ENCODE measurements at regions of chr1 and their contacts with region 1.

Region 1: DNA sequence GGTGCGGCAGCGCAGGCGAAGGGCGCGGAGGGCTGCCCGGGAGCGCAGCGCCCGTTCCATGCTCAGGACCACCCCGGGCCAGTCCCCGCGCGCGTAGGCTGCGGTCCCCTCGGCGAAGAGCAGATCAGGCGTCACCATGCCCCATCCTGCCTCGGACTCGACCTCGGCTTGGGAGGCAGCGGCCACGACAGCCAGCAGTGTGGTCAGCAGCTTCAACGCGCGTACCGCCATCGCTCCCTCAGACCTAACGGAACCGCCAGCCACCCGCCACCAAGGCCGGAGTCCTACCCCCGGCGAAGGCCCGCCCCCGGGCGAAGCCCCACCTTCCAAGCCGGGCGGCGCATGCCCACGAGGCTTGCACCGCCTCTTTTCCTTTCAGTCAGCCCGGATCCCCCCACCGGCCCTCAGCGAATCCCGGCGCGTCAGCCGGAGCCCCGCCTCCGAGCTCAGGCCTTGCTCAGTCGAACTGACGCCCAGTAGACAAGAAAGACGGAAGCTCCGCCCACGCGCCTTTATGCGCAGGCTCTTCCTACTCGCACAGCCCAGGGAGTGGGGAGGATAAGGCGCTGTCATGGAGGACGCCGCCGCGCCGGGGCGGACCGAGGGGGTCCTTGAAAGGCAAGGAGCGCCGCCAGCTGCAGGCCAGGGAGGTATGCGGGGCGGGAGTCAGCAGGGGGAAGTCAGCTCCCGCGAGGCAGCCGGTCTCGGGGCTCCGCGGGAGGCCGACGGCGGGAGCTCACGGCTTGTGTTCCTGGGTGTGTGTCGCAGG is at the starts of genes C1orf50 and P3H1:
- DNase-seq: peak; percentile 99 to 100
- ATAC-seq: peak; percentile 94 to 96
- H3K4me3 ChIP-seq: peak within 1 kb of the TSS; percentile 75 to 99 (median 94)
- H3K27ac ChIP-seq: peak within 1 kb of the TSS; percentile 92 to 96 (median 95)
- H3K4me1 ChIP-seq: peaks cover 33 to 34% of the 10 kb centered on the region in 2 donors
- H3K27me3 ChIP-seq: no peaks in the 10 kb centered on the region
- CTCF ChIP-seq: no peak
- POLR2A ChIP-seq: peak; percentile 97 to 98
- total RNA-seq, gene C1orf50: 2.8 to 14.7 (median 5.4) TPM
- total RNA-seq, gene P3H1: 3.0 to 7.0 (median 5.6) TPM

Region 2: DNA sequence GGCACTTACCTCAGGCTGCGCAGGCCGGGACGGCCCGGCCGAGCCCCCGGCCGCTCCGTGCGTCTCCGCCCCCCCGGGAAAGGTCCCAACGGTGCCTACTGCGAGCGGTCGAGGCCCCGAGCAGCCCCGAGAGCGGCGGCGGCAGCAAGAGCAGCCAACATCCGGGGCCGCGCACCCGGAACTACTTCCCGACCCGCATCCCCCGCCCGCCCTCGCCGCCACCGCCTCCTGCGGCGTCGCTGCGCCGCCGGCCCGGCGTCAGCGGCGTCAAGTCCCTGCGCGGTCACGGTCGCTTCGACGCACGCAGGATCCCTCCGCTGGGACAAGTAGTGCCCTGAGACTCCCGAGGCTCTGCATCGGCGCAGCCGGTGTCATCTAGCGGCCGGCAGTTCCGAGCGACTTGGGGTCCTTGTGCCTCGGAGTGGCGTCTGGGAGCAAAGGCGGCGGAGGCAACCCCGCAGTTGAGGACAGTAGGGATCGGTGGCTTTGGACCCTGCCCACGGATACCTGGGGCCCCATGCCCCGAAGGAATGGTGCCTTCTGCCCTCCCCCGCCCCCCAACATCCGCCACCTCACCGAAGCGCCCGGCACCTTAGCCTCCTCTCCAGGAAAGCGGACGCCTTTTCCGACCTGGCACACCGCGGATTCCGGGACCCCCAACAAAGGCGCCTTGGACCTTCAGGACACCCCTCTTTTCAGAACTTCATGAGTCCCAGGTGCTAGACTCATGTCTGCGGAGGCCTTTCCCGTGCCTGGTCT is 431.7 kb before region 1 on chr1 and contains the start of gene FOXJ3:
- in situ Hi-C with region 1: loop called in 1 of 4 experiments (anchors 25 kb)
- intact Hi-C with region 1: loop called (anchors 10 kb)
- DNase-seq: peak; percentile 87 to 89
- ATAC-seq: peak; percentile 92
- H3K4me3 ChIP-seq: peak within 1 kb of the TSS; percentile 74 to 91 (median 76)
- H3K27ac ChIP-seq: peak within 1 kb of the TSS; percentile 87 to 98 (median 98)
- H3K4me1 ChIP-seq: peaks cover 31 to 34% of the 10 kb centered on the region in 2 donors
- H3K27me3 ChIP-seq: no peaks in the 10 kb centered on the region
- CTCF ChIP-seq: peak in 1 of 5 experiments; percentile 22
- POLR2A ChIP-seq: peak; percentile 82 to 86
- total RNA-seq, gene FOXJ3: 39.4 to 81.0 (median 56.3) TPM

Region 3: GRCh38 chr1:42657971-42658879 is 108.7 kb before region 1 on chr1 and contains the start of gene PPIH:
- in situ Hi-C with region 1: no loop called
- intact Hi-C with region 1: loop called (anchors 5 kb)
- DNase-seq: peak; percentile 86 to 91
- ATAC-seq: peak; percentile 98 to 99
- H3K4me3 ChIP-seq: peak within 1 kb of the TSS; percentile 80 to 94 (median 89)
- H3K27ac ChIP-seq: peak within 1 kb of the TSS; percentile 82 to 92 (median 89)
- H3K4me1 ChIP-seq: peaks cover 14 to 15% of the 10 kb centered on the region in 2 donors
- H3K27me3 ChIP-seq: no peaks in the 10 kb centered on the region
- CTCF ChIP-seq: peak in 4 of 5 experiments; percentile 31 to 56 (median 47)
- POLR2A ChIP-seq: peak; percentile 50 to 58
- total RNA-seq, gene PPIH: 6.1 to 13.6 (median 7.1) TPM

Region 4: DNA sequence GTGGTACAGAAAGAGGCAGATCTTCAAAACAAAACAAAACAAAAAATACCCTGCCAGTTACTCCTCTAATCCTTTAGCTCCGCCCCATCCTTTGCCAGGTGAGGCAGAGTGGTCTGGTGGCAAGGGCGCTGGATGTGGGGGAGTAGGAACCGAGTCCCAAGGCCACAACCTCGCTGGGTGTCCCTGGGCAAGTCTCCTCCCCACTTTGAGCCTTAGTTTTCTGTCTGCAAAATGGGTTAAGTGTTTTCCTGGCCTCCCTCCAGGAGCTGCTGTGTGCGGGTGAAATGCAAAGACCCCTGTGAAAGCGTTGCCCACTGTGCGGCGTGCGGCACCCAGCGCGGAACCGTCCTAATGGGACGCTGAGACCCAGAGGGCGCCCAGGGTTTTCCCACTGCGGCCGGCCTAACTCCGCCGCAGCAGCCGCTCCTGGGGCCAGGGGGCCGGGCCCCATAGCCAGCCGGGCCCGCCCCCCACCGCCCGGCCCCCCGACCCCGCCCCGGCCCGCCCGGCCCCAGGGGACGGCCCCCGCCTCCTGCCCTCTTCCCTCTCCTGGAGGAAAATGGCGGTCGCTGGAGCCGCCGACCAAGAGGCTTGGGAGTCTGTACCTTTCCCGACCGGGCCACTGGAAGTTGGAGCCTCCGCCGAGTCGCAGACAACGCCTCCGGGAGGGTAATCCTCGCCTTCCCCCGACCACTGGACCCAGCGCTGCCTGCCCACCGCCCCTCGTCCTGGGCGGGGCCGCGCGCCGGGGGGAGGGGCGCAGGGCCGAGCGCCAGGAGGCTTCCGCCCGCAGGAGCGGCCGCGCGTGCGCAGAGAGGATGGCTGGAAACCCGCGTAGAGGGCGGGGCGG is 49.9 kb after region 1 on chr1 and contains the starts of genes ERMAP and SVBP:
- in situ Hi-C with region 1: no loop called
- intact Hi-C with region 1: loop called (anchors 1 kb)
- DNase-seq: peak; percentile 84 to 87
- ATAC-seq: peak; percentile 97
- H3K4me3 ChIP-seq: peak within 1 kb of the TSS; percentile 65 to 95 (median 76)
- H3K27ac ChIP-seq: peak within 1 kb of the TSS; percentile 88 to 100 (median 96)
- H3K4me1 ChIP-seq: peaks cover 2 to 20% of the 10 kb centered on the region in 2 donors
- H3K27me3 ChIP-seq: no peaks in the 10 kb centered on the region
- CTCF ChIP-seq: no peak
- POLR2A ChIP-seq: no peak
- total RNA-seq, gene ERMAP: 1.4 to 6.5 (median 3.9) TPM
- total RNA-seq, gene SVBP: 15.5 to 26.4 (median 24.9) TPM

Region 5: DNA sequence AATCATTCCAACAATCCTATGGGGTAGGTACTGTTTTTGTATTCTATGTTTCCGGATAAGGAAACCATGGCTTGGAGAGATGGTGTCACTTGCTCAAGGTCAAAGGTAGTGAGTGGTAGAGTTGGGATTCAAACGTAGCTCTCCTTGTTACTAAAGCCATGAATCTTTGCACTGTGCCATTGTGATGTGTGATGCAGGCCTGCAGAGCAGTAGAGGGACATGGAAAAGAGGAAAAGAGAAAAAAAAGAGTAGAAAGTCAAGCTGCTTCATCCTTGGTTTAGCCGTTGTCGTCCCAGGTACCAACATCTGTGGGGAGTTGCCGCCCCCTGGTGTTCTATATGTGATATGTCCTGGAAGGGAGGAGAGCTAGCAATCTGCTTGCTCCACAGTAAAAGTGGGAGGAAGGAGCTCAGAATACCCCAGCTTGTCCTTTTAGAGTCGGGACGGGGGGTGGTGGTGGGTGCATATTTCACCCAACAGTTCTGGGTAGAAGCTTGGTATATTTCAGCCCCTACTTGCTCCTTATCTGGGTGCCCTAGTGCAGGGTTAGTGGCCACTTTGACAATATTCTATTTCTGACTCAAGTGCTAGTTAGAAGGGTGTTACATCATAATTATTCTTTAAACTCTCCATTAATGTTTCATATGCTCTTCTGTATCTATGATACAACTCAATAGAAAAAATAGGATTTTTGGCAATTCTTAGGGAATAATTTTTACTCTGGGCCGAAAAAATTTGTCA is 306.7 kb after region 1 on chr1:
- in situ Hi-C with region 1: loop called in 2 of 4 experiments (anchors 10 to 25 kb)
- intact Hi-C with region 1: no loop called
- DNase-seq: peak; percentile 47 to 50
- ATAC-seq: peak; percentile 63 to 85
- H3K4me3 ChIP-seq: no peak overlapping the region
- H3K27ac ChIP-seq: no peak overlapping the region
- H3K4me1 ChIP-seq: no peaks in the 10 kb centered on the region
- H3K27me3 ChIP-seq: peaks cover 3 to 4% (median 4%) of the 10 kb centered on the region in 3 donors
- CTCF ChIP-seq: peak; percentile 78 to 89 (median 85)
- POLR2A ChIP-seq: no peak

Measured in gastrocnemius medialis (tissue), 4 donors.